ENCODE measurements at regions of chr19 and their contacts with region 1.

Region 1: DNA sequence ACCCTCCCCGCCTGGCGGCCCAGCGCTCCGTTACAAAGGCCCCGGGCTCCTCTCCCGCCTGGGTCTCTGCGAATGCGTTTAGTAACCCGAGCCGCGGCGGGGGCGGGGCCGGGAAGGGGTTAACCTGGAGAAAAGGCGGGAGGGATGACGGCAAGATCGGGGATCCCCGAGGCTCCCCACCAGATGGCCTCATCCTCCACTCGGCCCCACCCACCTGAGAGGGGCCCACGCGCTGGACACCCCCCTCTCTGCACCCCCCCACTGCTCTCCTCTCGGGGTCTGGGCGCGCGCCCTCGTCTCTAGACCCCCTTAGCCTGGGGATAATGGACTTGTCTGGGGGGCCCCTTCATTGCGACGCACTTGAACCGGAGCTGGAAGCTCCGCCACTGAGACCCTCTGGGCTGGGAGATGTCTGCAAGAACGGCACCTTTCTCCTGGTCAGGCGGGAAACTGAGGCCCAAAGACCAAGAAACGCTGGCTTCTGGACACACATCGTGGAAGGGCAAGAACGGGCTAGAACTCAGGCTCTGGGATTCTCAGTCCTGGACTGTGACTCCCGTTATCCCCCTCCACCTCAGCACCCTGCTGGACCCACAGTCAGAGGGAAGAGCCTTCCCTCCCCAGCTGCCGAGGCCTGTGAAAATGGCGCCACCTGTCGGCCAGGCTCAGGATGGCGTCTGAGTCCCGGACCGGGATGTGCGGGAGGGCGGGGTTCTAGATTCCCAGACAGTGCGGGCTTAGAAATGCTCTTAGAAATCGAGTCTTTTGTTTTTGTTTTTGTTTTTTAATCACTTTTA is 2.9 kb upstream of the LTBP4 start:
- DNase-seq: peak; percentile 95
- H3K4me3 Mint-ChIP-seq: no peak overlapping the region
- H3K27ac Mint-ChIP-seq: no peak overlapping the region
- H3K4me1 Mint-ChIP-seq: peaks cover 60% of the 10 kb centered on the region
- H3K27me3 Mint-ChIP-seq: peaks cover 67% of the 10 kb centered on the region
- CTCF ChIP-seq: peak; percentile 97

Region 2: DNA sequence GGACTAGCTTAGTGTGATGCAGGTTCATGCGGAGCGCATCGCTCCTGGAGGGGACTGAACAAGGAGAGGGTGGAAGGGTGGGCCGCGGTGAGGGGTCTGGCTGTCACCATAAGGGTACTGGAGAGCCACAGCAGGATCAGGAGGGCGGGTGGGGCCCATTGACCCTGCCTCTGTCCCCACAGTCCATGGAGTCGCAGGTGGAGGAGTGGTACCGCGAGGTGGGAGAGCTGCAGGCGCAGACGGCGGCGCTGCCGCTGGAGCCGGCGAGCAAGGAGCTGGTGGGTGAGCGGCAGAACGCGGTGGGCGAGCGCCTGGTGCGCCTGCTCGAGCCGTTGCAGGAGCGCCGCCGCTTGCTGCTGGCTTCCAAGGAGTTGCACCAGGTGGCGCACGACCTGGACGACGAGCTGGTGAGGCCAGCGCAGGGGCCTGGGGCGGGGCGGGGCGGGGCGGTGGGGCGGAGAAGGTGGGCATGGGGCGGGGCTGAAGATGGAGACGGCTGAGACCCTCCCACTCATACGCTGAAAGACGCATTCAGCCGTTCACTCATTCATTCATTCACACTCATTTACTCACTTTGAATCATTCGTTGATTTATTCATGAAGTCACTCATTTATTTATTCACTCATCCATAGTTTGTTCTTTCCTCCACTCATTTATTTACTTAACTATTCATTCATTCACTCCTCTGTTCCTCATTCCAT is 49.2 kb before region 1 on chr19:
- CTCF ChIA-PET with region 1: interaction called, 4 read pairs
- intact Hi-C with region 1: loop called (anchors 5 kb)
- DNase-seq: peak; percentile 90
- H3K4me3 Mint-ChIP-seq: peak overlapping the region; percentile 36
- H3K27ac Mint-ChIP-seq: no peak overlapping the region
- H3K4me1 Mint-ChIP-seq: no peaks in the 10 kb centered on the region
- H3K27me3 Mint-ChIP-seq: peaks cover 55% of the 10 kb centered on the region
- CTCF ChIP-seq: peak; percentile 51